GM12878 (cell line): ENCODE measurements at regions of chr2 and their contacts with region 1.

Region 1: GRCh38 chr2:13000664-13001363 is 284.1 kb downstream of the TRIB2 start:
- DNase-seq: no peak
- ATAC-seq: no peak
- H3K4me3 ChIP-seq: no peak overlapping the region
- H3K27ac ChIP-seq: no peak overlapping the region
- H3K4me1 ChIP-seq: no peaks in the 10 kb centered on the region
- H3K27me3 ChIP-seq: no peaks in the 10 kb centered on the region; a peak in 1 of 4 replicates
- CTCF ChIP-seq: no peak
- EP300 ChIP-seq: no peak
- POLR2A ChIP-seq: no peak
- RAD21 ChIP-seq: no peak

Region 2: DNA sequence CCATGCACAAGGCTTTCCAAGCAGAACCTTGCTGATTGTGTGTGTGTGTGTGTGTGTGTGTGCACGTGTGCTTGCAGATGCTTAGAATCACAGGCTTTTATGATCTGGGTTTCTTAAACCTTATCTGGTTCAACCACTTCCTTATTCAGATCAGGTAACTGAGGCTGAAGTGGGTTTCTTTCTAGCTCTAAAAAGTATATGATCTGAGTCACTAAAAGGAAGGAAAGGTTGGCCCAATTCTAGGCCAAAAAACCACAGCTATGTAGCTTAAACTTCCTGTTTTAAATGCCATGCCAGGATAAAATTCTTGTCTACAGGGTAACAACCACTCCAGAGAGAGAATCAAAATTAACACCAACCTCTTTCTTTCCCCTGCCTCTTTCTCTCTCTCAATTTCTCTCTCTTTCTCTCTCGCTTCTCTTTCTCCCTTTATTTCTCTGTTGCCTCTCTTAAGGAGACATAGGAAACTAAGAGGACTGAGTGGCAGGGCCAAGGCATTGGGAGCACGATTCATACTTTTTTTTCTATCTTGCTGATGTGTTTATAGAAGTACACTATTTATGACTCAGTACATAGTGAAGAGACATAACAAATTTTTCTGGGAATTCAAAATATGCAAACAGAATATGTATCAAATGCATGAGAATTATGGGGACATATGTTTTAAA is 143.7 kb before region 1 on chr2:
- CTCF ChIA-PET with region 1: no interaction called
- POLR2A ChIA-PET with region 1: no interaction called
- RAD21 ChIA-PET with region 1: no interaction called
- SMC1A ChIA-PET with region 1: no interaction called
- in situ Hi-C with region 1: no loop called
- intact Hi-C with region 1: no loop called
- DNase-seq: no peak
- ATAC-seq: 0 out of 3 replicates have a peak, but pooled peaks have one; percentile 17
- H3K4me3 ChIP-seq: no peak overlapping the region
- H3K27ac ChIP-seq: no peak overlapping the region
- H3K4me1 ChIP-seq: no peaks in the 10 kb centered on the region
- H3K27me3 ChIP-seq: no peaks in the 10 kb centered on the region
- CTCF ChIP-seq: no peak
- EP300 ChIP-seq: no peak
- POLR2A ChIP-seq: no peak
- RAD21 ChIP-seq: no peak

Region 3: GRCh38 chr2:12965540-12966269 is 35.1 kb before region 1 on chr2:
- CTCF ChIA-PET with region 1: no interaction called
- POLR2A ChIA-PET with region 1: no interaction called
- RAD21 ChIA-PET with region 1: no interaction called
- SMC1A ChIA-PET with region 1: no interaction called
- in situ Hi-C with region 1: no loop called
- intact Hi-C with region 1: no loop called
- DNase-seq: no peak
- ATAC-seq: no peak
- H3K4me3 ChIP-seq: no peak overlapping the region
- H3K27ac ChIP-seq: no peak overlapping the region
- H3K4me1 ChIP-seq: no peaks in the 10 kb centered on the region
- H3K27me3 ChIP-seq: no peaks in the 10 kb centered on the region; a peak in 1 of 4 replicates
- CTCF ChIP-seq: no peak
- EP300 ChIP-seq: no peak
- POLR2A ChIP-seq: no peak
- RAD21 ChIP-seq: no peak

Region 4: GRCh38 chr2:12990523-12990922 is 10.3 kb before region 1 on chr2:
- CTCF ChIA-PET with region 1: interaction called, 11 read pairs
- POLR2A ChIA-PET with region 1: no interaction called
- RAD21 ChIA-PET with region 1: no interaction called
- SMC1A ChIA-PET with region 1: interaction called, 3 read pairs
- in situ Hi-C with region 1: no loop called
- intact Hi-C with region 1: no loop called
- DNase-seq: no peak
- ATAC-seq: no peak
- H3K4me3 ChIP-seq: no peak overlapping the region
- H3K27ac ChIP-seq: no peak overlapping the region
- H3K4me1 ChIP-seq: no peaks in the 10 kb centered on the region
- H3K27me3 ChIP-seq: no peaks in the 10 kb centered on the region
- CTCF ChIP-seq: no peak
- EP300 ChIP-seq: no peak
- POLR2A ChIP-seq: no peak
- RAD21 ChIP-seq: no peak